ENCODE measurements at regions of chr7 and their contacts with region 1.

Region 1: GRCh38 chr7:33109005-33109757 is at the start of gene RP9:
- DNase-seq: peak; percentile 57
- ATAC-seq: peak; percentile 87
- H3K4me3 ChIP-seq: peak within 1 kb of the TSS; percentile 79 to 90
- H3K27ac ChIP-seq: peak within 1 kb of the TSS; percentile 91
- H3K4me1 ChIP-seq: peaks cover 4 to 24% of the 10 kb centered on the region in 2 experiments; a peak in 3 of 4 replicates
- H3K27me3 ChIP-seq: no peaks in the 10 kb centered on the region
- CTCF ChIP-seq: peak in 2 of 3 experiments; percentile 39 to 43; a peak in 5 of 6 replicates
- POLR2A ChIP-seq: peak; percentile 59
- RAD21 ChIP-seq: peak; percentile 57
- total RNA-seq, gene RP9: 14.2 TPM

Region 2: GRCh38 chr7:32500922-32501341 is 608.2 kb before region 1 on chr7:
- CTCF ChIA-PET with region 1: no interaction called
- POLR2A ChIA-PET with region 1: no interaction called
- RAD21 ChIA-PET with region 1: no interaction called
- intact Hi-C with region 1: loop called (anchors 10 kb)
- DNase-seq: no peak
- ATAC-seq: peak; percentile 65
- H3K4me3 ChIP-seq: no peak overlapping the region
- H3K27ac ChIP-seq: peak overlapping the region; percentile 34; the same call in 1 of the 2 replicates
- H3K4me1 ChIP-seq: peaks cover 27 to 40% of the 10 kb centered on the region in 2 experiments
- H3K27me3 ChIP-seq: no peaks in the 10 kb centered on the region
- CTCF ChIP-seq: no peak
- POLR2A ChIP-seq: no peak
- RAD21 ChIP-seq: no peak

Region 3: DNA sequence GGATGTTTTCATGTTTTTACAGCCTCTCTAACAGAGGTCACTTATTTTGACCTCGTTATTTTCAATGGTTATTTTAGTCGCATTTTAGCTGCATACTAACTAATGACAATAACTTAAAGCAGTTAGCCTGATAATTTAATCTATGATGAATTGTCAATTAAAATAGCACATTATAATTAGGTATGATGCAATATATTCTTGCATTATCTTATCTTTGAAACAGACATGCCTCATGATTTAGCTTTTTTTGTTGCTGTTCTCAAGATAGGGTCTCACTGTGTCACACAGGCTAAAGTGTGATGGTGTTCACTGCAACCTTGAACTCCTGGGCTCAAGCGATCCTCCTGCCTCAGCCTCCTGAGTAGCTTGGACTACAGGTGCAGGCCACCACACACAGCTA is 344.0 kb before region 1 on chr7:
- CTCF ChIA-PET with region 1: interaction called, 26 read pairs
- POLR2A ChIA-PET with region 1: no interaction called
- RAD21 ChIA-PET with region 1: interaction called in 1 of 2 experiments, 7 read pairs
- intact Hi-C with region 1: loop called (anchors 2 kb)
- DNase-seq: no peak
- ATAC-seq: no peak
- H3K4me3 ChIP-seq: no peak overlapping the region
- H3K27ac ChIP-seq: no peak overlapping the region
- H3K4me1 ChIP-seq: no peaks in the 10 kb centered on the region
- H3K27me3 ChIP-seq: no peaks in the 10 kb centered on the region
- CTCF ChIP-seq: no peak
- POLR2A ChIP-seq: no peak
- RAD21 ChIP-seq: no peak

Region 4: GRCh38 chr7:32846701-32847100 is 262.5 kb before region 1 on chr7:
- CTCF ChIA-PET with region 1: interaction called, 28 read pairs
- POLR2A ChIA-PET with region 1: no interaction called
- RAD21 ChIA-PET with region 1: interaction called in 1 of 2 experiments, 3 read pairs
- intact Hi-C with region 1: loop called (anchors 1 kb)
- DNase-seq: peak; percentile 82
- ATAC-seq: peak; percentile 100
- H3K4me3 ChIP-seq: peak overlapping the region in 1 of 2 experiments; percentile 16; a peak in 1 of 4 replicates
- H3K27ac ChIP-seq: no peak overlapping the region
- H3K4me1 ChIP-seq: peaks cover 0 to 6% of the 10 kb centered on the region in 2 experiments; a peak in 1 of 4 replicates
- H3K27me3 ChIP-seq: no peaks in the 10 kb centered on the region
- CTCF ChIP-seq: peak; percentile 95 to 97 (median 95)
- POLR2A ChIP-seq: no peak
- RAD21 ChIP-seq: peak; percentile 76

Region 5: DNA sequence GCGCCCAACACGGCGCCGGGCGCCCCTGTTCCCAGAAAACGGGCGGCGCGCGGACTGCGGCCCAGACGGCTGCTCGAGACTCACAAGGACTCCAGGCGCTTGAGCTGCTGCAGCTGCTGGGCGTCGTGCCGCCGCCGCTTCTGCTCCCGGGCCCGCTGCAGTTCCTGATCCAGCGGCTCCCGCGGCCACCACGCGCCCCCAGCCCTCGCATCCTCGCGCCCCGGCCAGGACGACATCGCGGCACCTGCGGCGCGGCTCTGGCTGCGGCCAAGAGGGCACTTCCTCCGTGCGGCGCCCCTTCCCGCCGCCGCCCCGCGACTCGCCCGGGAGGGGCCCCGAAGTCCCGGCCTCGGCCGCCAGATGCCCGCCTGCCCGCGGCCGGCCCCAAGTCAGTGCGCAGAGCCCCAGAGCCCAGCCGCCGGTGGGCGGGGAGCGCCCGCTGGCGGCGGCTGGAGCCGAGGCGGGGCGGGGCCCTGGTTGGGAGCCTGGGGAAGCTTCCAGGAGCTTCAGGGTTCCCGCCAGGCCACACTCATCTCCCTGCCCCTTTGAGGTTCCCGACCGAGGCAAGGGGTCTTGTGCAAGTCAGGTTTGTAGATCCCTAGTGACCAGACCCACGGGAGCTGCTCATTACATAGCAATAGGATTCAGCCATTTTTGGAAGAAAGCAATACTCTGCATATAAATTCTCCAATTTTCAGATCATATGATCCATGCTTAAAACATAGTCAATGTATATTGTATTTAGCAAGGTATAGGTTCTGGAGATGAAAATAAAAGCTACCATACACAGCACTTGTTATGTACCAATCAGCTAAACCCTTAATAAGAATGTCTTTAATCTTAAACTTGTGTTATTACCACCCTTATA is 166.2 kb before region 1 on chr7:
- CTCF ChIA-PET with region 1: no interaction called
- POLR2A ChIA-PET with region 1: no interaction called
- RAD21 ChIA-PET with region 1: no interaction called
- intact Hi-C with region 1: loop called (anchors 5 kb)
- DNase-seq: peak; percentile 50
- ATAC-seq: peak; percentile 89
- H3K4me3 ChIP-seq: peak overlapping the region; percentile 79 to 86
- H3K27ac ChIP-seq: peak overlapping the region; percentile 96
- H3K4me1 ChIP-seq: peaks cover 8 to 18% of the 10 kb centered on the region in 2 experiments
- H3K27me3 ChIP-seq: no peaks in the 10 kb centered on the region
- CTCF ChIP-seq: peak; percentile 33 to 40 (median 40); a peak in 5 of 6 replicates
- POLR2A ChIP-seq: peak; percentile 17
- RAD21 ChIP-seq: peak; percentile 58

Region 6: DNA sequence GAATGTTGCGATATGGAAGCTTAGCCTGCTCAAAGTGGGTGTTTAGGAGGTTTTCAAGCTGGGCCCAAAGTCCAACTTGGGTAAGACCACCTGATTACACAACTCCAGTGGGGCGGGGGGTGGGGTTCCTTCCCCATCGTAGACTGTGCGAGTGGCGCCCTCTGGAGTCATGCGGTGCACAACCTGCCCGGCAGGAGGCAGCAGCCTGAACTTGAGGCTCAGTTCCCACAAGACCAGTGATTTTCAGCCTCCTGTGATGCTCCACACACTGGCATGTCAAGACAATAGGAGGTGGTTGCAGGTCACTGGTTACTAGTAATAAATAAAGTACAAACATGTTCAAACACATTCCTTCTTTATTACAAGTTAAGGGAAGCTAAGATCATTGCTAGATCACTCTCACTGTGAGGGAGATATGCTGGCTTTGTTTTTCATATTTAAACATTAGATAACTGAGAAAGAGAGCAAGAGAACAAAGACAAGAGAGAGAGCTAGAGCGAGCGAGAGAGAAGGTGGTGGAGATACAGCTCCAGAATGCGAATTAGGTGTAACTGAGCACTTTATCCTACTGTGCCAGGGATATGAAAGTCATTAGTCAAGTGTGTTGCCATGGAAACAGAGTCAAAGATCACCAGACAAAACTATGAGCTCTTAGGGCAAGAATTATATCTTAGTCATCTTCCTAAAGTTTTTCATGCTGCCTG is 698.8 kb after region 1 on chr7:
- CTCF ChIA-PET with region 1: no interaction called
- POLR2A ChIA-PET with region 1: no interaction called
- RAD21 ChIA-PET with region 1: no interaction called
- intact Hi-C with region 1: no loop called
- DNase-seq: peak; percentile 10
- ATAC-seq: peak; percentile 93
- H3K4me3 ChIP-seq: no peak overlapping the region
- H3K27ac ChIP-seq: no peak overlapping the region
- H3K4me1 ChIP-seq: 0 out of 4 replicates have a peak, but pooled peaks cover 0 to 5% of the 10 kb centered on the region in 2 experiments
- H3K27me3 ChIP-seq: peaks cover 4% of the 10 kb centered on the region; the same call in 1 of the 2 replicates
- CTCF ChIP-seq: peak; percentile 74 to 76 (median 74)
- POLR2A ChIP-seq: no peak
- RAD21 ChIP-seq: peak; percentile 57

Measured in HCT116 (cell line).